Calu3 (cell line): ENCODE measurements at regions of chr2 and their contacts with region 1.

Region 1: GRCh38 chr2:127479219-127479825 is 47.0 kb downstream of the IWS1 start:
- DNase-seq: no peak
- H3K4me3 Mint-ChIP-seq: no peak overlapping the region
- H3K27ac Mint-ChIP-seq: no peak overlapping the region
- H3K4me1 Mint-ChIP-seq: no peaks in the 10 kb centered on the region
- H3K27me3 Mint-ChIP-seq: no peaks in the 10 kb centered on the region
- CTCF ChIP-seq: peak; percentile 39

Region 2: DNA sequence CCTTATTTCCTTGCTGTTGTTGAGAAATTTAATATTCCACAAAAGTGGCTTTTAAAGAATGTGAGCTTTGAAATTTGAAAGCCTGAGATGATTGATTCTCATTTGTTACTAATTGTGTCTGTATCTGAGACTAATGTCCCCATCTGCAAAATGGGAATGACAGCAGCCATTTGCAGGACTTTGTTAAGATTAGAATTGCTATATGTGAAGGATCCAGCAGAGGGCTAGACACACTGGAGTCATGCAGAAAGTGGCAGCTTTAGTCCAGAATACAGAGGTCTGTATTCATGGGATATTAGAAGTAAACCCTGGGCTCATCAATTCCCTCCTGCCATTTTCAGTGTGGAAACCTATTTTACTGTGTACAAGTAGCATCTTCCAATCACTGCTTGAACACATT is 1119.8 kb before region 1 on chr2:
- CTCF ChIA-PET with region 1: no interaction called
- intact Hi-C with region 1: no loop called
- DNase-seq: no peak
- H3K4me3 Mint-ChIP-seq: no peak overlapping the region
- H3K27ac Mint-ChIP-seq: no peak overlapping the region
- H3K4me1 Mint-ChIP-seq: no peaks in the 10 kb centered on the region
- H3K27me3 Mint-ChIP-seq: no peaks in the 10 kb centered on the region
- CTCF ChIP-seq: no peak

Region 3: GRCh38 chr2:127197475-127198385 is 281.6 kb before region 1 on chr2:
- CTCF ChIA-PET with region 1: interaction called, 13 read pairs
- intact Hi-C with region 1: loop called (anchors 1 kb)
- DNase-seq: peak; percentile 87
- H3K4me3 Mint-ChIP-seq: peak overlapping the region; percentile 75
- H3K27ac Mint-ChIP-seq: peak overlapping the region; percentile 2
- H3K4me1 Mint-ChIP-seq: peaks cover 8% of the 10 kb centered on the region
- H3K27me3 Mint-ChIP-seq: peaks cover 26% of the 10 kb centered on the region
- CTCF ChIP-seq: peak; percentile 41

Region 4: DNA sequence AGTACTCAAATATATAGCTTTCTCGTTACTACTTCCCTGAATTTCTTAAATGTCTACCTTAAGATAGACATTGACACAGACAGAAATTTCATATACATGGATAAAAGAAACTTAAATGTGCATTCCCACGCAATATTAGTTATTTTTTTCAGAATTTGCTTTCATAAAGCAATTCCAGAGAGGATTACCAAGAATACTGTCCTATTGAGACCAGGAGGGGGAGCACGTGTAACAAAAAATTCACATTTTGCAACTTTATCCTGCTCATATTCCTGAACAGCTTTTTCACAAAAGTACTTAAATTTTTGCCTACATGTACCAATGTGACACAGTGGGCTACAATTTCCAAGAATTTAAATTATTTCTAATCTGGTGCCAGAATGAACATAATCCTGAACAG is 154.7 kb before region 1 on chr2:
- CTCF ChIA-PET with region 1: interaction called, 4 read pairs
- intact Hi-C with region 1: loop called (anchors 1 kb)
- DNase-seq: peak; percentile 39
- H3K4me3 Mint-ChIP-seq: no peak overlapping the region
- H3K27ac Mint-ChIP-seq: no peak overlapping the region
- H3K4me1 Mint-ChIP-seq: no peaks in the 10 kb centered on the region
- H3K27me3 Mint-ChIP-seq: no peaks in the 10 kb centered on the region
- CTCF ChIP-seq: peak; percentile 66

Region 5: DNA sequence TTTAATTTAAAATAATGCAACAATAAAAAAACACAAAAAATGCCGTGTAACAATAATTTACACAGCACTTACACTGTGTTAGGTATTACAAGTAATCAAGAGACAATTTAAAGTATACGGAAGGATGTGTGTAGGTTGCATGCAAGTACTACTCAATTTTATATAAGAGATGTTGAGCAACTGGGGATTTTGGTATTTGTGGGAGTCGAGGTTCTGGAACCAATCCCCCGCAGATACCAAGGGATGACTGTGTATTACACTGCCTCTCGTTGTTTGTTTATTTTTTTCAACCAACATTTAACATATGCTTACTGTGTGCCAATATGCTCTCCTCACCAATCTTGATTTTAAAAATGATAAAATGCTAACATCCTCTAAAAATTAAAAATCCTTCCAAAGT is 116.4 kb before region 1 on chr2:
- CTCF ChIA-PET with region 1: no interaction called
- intact Hi-C with region 1: loop called (anchors 5 kb)
- DNase-seq: no peak
- H3K4me3 Mint-ChIP-seq: no peak overlapping the region
- H3K27ac Mint-ChIP-seq: no peak overlapping the region
- H3K4me1 Mint-ChIP-seq: peaks cover 41% of the 10 kb centered on the region
- H3K27me3 Mint-ChIP-seq: no peaks in the 10 kb centered on the region
- CTCF ChIP-seq: no peak

Region 6: GRCh38 chr2:127373362-127374083 is 105.8 kb before region 1 on chr2:
- CTCF ChIA-PET with region 1: no interaction called
- intact Hi-C with region 1: no loop called
- DNase-seq: no peak
- H3K4me3 Mint-ChIP-seq: no peak overlapping the region
- H3K27ac Mint-ChIP-seq: no peak overlapping the region
- H3K4me1 Mint-ChIP-seq: peaks cover 9% of the 10 kb centered on the region
- H3K27me3 Mint-ChIP-seq: no peaks in the 10 kb centered on the region
- CTCF ChIP-seq: no peak